H1 (cell line): ENCODE measurements at regions of chr2 and their contacts with region 1.

Region 1: GRCh38 chr2:71558300-71559051 is 105.1 kb downstream of the DYSF start:
- DNase-seq: no peak
- H3K4me3 ChIP-seq: no peak overlapping the region
- H3K27ac ChIP-seq: no peak overlapping the region
- H3K4me1 ChIP-seq: peaks cover 0 to 6% (median 0%) of the 10 kb centered on the region in 4 experiments; a peak in 3 of 7 replicates
- H3K27me3 ChIP-seq: no peaks in the 10 kb centered on the region
- CTCF ChIP-seq: no peak
- EP300 ChIP-seq: no peak
- POLR2A ChIP-seq: no peak
- RAD21 ChIP-seq: no peak

Region 2: GRCh38 chr2:71597756-71598155 is 39.3 kb after region 1 on chr2:
- CTCF ChIA-PET with region 1: interaction called, 10 read pairs
- POLR2A ChIA-PET with region 1: no interaction called
- DNase-seq: no peak
- H3K4me3 ChIP-seq: no peak overlapping the region
- H3K27ac ChIP-seq: no peak overlapping the region
- H3K4me1 ChIP-seq: peaks cover 0 to 3% (median 0%) of the 10 kb centered on the region in 4 experiments; a peak in 1 of 7 replicates
- H3K27me3 ChIP-seq: no peaks in the 10 kb centered on the region
- CTCF ChIP-seq: no peak
- EP300 ChIP-seq: no peak
- POLR2A ChIP-seq: no peak
- RAD21 ChIP-seq: no peak

Region 3: GRCh38 chr2:71646028-71646427 is 87.6 kb after region 1 on chr2:
- CTCF ChIA-PET with region 1: no interaction called
- POLR2A ChIA-PET with region 1: no interaction called
- DNase-seq: no peak
- H3K4me3 ChIP-seq: no peak overlapping the region
- H3K27ac ChIP-seq: no peak overlapping the region
- H3K4me1 ChIP-seq: no peaks in the 10 kb centered on the region
- H3K27me3 ChIP-seq: no peaks in the 10 kb centered on the region
- CTCF ChIP-seq: no peak
- EP300 ChIP-seq: no peak
- POLR2A ChIP-seq: no peak
- RAD21 ChIP-seq: no peak